ENCODE measurements at regions of chr1 and their contacts with region 1.

Region 1: GRCh38 chr1:26787706-26788514 is at the start of gene PIGV:
- DNase-seq: peak; percentile 90
- H3K4me3 Mint-ChIP-seq: peak within 1 kb of the TSS; percentile 90
- H3K27ac Mint-ChIP-seq: peak within 1 kb of the TSS; percentile 99
- H3K4me1 Mint-ChIP-seq: peaks cover 77% of the 10 kb centered on the region
- H3K27me3 Mint-ChIP-seq: no peaks in the 10 kb centered on the region
- total RNA-seq, gene PIGV: 15.1 to 15.3 TPM

Region 2: GRCh38 chr1:26593385-26593784 is 194.5 kb before region 1 on chr1:
- CTCF ChIA-PET with region 1: interaction called, 245 read pairs
- POLR2A ChIA-PET with region 1: no interaction called
- intact Hi-C with region 1: no loop called
- DNase-seq: no peak
- H3K4me3 Mint-ChIP-seq: no peak overlapping the region
- H3K27ac Mint-ChIP-seq: no peak overlapping the region
- H3K4me1 Mint-ChIP-seq: peaks cover 6% of the 10 kb centered on the region
- H3K27me3 Mint-ChIP-seq: no peaks in the 10 kb centered on the region

Region 3: GRCh38 chr1:26695356-26696118 is 92.4 kb before region 1 on chr1 and contains the start of gene ARID1A:
- CTCF ChIA-PET with region 1: interaction called, 113 read pairs
- POLR2A ChIA-PET with region 1: interaction called, 177 read pairs
- intact Hi-C with region 1: loop called (anchors 1 kb)
- DNase-seq: peak; percentile 97
- H3K4me3 Mint-ChIP-seq: peak within 1 kb of the TSS; percentile 86
- H3K27ac Mint-ChIP-seq: peak within 1 kb of the TSS; percentile 98
- H3K4me1 Mint-ChIP-seq: peaks cover 25% of the 10 kb centered on the region
- H3K27me3 Mint-ChIP-seq: no peaks in the 10 kb centered on the region
- total RNA-seq, gene ARID1A: 64.3 to 67.8 TPM

Region 4: GRCh38 chr1:26758370-26758769 is 29.5 kb before region 1 on chr1:
- CTCF ChIA-PET with region 1: interaction called, 11 read pairs
- POLR2A ChIA-PET with region 1: interaction called, 3 read pairs
- intact Hi-C with region 1: no loop called
- DNase-seq: no peak
- H3K4me3 Mint-ChIP-seq: no peak overlapping the region
- H3K27ac Mint-ChIP-seq: peak overlapping the region; percentile 52
- H3K4me1 Mint-ChIP-seq: peaks cover 8% of the 10 kb centered on the region
- H3K27me3 Mint-ChIP-seq: no peaks in the 10 kb centered on the region

Region 5: GRCh38 chr1:26826261-26827105 is 38.6 kb after region 1 on chr1 and contains the start of gene ZDHHC18:
- CTCF ChIA-PET with region 1: interaction called, 7 read pairs
- POLR2A ChIA-PET with region 1: interaction called, 9 read pairs
- intact Hi-C with region 1: loop called (anchors 1 kb)
- DNase-seq: peak; percentile 79
- H3K4me3 Mint-ChIP-seq: peak within 1 kb of the TSS; percentile 94
- H3K27ac Mint-ChIP-seq: peak within 1 kb of the TSS; percentile 96
- H3K4me1 Mint-ChIP-seq: peaks cover 41% of the 10 kb centered on the region
- H3K27me3 Mint-ChIP-seq: no peaks in the 10 kb centered on the region
- total RNA-seq, gene ZDHHC18: 60.2 to 63.5 TPM

Region 6: DNA sequence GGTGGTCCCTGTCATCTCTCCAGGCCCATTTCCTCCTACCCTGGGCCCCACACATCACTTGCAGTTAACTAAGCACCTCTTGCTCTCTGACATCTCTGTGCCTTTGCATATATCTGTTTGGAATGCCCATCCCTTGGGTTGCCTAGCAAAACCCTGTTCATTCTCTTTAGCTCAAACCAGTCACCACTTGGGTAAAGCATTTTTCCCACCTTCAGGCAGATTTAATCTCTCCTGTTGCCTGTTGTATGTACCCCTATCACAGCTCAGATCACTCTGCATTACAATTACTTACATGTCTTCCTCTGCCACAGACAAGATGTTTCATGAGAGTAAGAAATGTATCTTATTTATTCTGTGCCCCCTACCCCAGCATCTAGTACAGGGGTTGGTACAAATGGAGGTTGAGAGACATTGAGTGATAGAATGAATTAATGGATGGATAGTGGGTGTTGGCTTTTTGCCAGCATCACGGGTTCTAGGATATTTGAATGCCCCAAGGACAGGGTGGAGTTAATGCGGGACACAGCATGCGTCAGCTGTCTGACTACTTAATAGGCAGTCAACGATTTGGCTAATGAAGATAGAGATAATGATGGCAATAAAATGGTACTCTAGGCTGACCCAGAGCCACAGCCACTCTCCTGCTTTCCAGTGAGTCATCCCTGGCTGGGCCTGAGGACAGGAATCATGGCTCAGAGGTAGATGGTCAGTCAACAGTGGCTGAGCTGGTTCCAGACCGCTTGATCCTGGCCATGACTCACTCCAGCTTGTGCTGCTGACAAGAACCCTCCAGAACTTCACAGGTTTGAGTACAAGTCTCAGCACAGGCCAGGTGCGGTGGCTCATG is 119.4 kb after region 1 on chr1:
- CTCF ChIA-PET with region 1: no interaction called
- POLR2A ChIA-PET with region 1: no interaction called
- intact Hi-C with region 1: no loop called
- DNase-seq: no peak
- H3K4me3 Mint-ChIP-seq: no peak overlapping the region
- H3K27ac Mint-ChIP-seq: no peak overlapping the region
- H3K4me1 Mint-ChIP-seq: no peaks in the 10 kb centered on the region
- H3K27me3 Mint-ChIP-seq: no peaks in the 10 kb centered on the region

Measured in activated CD4-positive, alpha-beta memory T cell treated with anti-CD3 and anti-CD28 coated beads for 36 hours (primary cell).